T-cell (primary cell): ENCODE measurements at regions of chr6 and their contacts with region 1.

Region 1: DNA sequence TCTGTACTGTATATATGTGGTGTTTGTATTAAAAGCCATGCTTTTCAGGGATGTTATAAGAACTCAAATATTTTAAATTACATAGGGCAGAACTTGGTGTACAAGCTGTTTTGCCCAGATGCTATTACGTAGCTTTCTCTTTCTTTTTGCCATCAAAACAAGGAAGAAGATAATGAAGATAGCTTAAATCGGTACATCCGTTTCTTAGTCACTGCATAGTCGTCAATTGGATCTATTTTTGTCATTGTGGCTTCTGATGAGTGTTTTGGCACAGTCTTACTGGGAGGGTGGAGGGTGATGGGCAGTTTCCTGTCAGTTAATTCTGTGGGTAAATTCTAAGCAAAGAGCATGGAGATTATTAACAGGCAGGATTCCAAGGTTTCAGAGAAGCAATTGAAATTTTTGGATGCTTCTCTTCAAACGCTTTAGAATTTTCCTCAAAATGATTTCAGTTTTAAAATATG is 649.1 kb upstream of the GJE1 start:
- DNase-seq: peak in 33 of 35 experiments; percentile 27 to 83 (median 53)
- ATAC-seq: peak; percentile 95 to 99 (median 98)
- H3K4me3 ChIP-seq: peak overlapping the region; percentile 17 to 42
- H3K4me3 Mint-ChIP-seq: peak overlapping the region; percentile 68 to 78 (median 77)
- H3K27ac ChIP-seq: peak overlapping the region; percentile 89
- H3K27ac Mint-ChIP-seq: peak overlapping the region; percentile 97 to 98
- H3K4me1 ChIP-seq: peaks cover 12 to 14% of the 10 kb centered on the region in 2 experiments
- H3K4me1 Mint-ChIP-seq: peaks cover 43 to 51% (median 50%) of the 10 kb centered on the region in 3 donors
- H3K27me3 ChIP-seq: no peaks in the 10 kb centered on the region
- H3K27me3 Mint-ChIP-seq: no peaks in the 10 kb centered on the region

Region 2: GRCh38 chr6:141282263-141282662 is 201.4 kb before region 1 on chr6:
- CTCF ChIA-PET with region 1: no interaction called
- POLR2A ChIA-PET with region 1: no interaction called
- DNase-seq: no peak
- ATAC-seq: no peak
- H3K4me3 ChIP-seq: no peak overlapping the region
- H3K4me3 Mint-ChIP-seq: no peak overlapping the region
- H3K27ac ChIP-seq: no peak overlapping the region
- H3K27ac Mint-ChIP-seq: no peak overlapping the region
- H3K4me1 ChIP-seq: no peaks in the 10 kb centered on the region
- H3K4me1 Mint-ChIP-seq: no peaks in the 10 kb centered on the region
- H3K27me3 ChIP-seq: no peaks in the 10 kb centered on the region
- H3K27me3 Mint-ChIP-seq: no peaks in the 10 kb centered on the region

Region 3: GRCh38 chr6:141421376-141421775 is 62.3 kb before region 1 on chr6:
- CTCF ChIA-PET with region 1: no interaction called
- POLR2A ChIA-PET with region 1: no interaction called
- DNase-seq: no peak
- ATAC-seq: no peak
- H3K4me3 ChIP-seq: no peak overlapping the region
- H3K4me3 Mint-ChIP-seq: no peak overlapping the region
- H3K27ac ChIP-seq: no peak overlapping the region
- H3K27ac Mint-ChIP-seq: no peak overlapping the region
- H3K4me1 ChIP-seq: no peaks in the 10 kb centered on the region
- H3K4me1 Mint-ChIP-seq: no peaks in the 10 kb centered on the region
- H3K27me3 ChIP-seq: no peaks in the 10 kb centered on the region
- H3K27me3 Mint-ChIP-seq: no peaks in the 10 kb centered on the region

Region 4: DNA sequence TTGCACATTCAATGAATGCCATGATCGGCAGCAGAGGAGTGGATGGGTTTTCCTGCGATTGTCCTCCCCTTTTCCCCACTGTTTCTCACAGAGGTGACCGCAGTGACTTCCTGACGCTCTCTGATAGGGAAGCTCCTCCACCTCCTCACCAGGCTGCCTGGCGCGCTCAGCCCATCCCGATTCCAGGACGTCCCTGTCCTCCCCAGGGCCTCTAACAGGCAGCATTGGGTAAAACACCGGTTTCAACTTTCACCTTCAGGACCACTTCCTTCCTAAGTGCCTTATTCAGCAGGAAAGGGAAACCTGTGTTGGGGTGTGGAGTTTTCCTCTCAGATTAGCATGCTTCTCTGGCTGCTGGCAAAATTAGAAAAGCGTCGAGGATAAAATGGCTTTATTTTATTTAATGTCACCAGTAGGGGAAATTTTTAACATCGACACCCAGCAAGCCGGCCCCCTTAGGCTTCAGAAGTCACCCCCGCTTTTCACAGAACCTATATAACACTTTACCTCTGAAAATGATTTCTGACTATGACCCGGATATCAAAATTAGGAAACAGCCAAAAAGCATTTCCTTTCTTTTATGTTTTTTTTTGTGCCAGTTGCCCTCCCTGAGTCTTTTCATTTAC is 78.7 kb after region 1 on chr6:
- CTCF ChIA-PET with region 1: interaction called, 3 to 13 read pairs
- POLR2A ChIA-PET with region 1: no interaction called
- DNase-seq: peak in 14 of 35 experiments; percentile 1 to 24 (median 3)
- ATAC-seq: peak; percentile 36 to 66 (median 43)
- H3K4me3 ChIP-seq: peak overlapping the region; percentile 43 to 58
- H3K4me3 Mint-ChIP-seq: peak overlapping the region; percentile 80 to 87 (median 83)
- H3K27ac ChIP-seq: peak overlapping the region; percentile 46
- H3K27ac Mint-ChIP-seq: peak overlapping the region; percentile 60 to 76
- H3K4me1 ChIP-seq: peaks cover 2 to 6% of the 10 kb centered on the region in 2 experiments
- H3K4me1 Mint-ChIP-seq: peaks cover 13 to 15% (median 13%) of the 10 kb centered on the region in 3 donors
- H3K27me3 ChIP-seq: peaks cover 0 to 5% of the 10 kb centered on the region in 2 experiments
- H3K27me3 Mint-ChIP-seq: peaks cover 0 to 5% of the 10 kb centered on the region in 2 donors